Mammary epithelial cell (primary cell): ENCODE measurements at regions of chr2 and their contacts with region 1.

Region 1: GRCh38 chr2:88627056-88627855 is at the start of gene EIF2AK3:
- DNase-seq: peak; percentile 100
- H3K4me3 ChIP-seq: peak within 1 kb of the TSS; percentile 82 to 95 (median 92)
- H3K27ac ChIP-seq: peak within 1 kb of the TSS; percentile 93
- H3K4me1 ChIP-seq: peaks cover 14% of the 10 kb centered on the region
- H3K27me3 ChIP-seq: no peaks in the 10 kb centered on the region
- CTCF ChIP-seq: no peak
- total RNA-seq, gene EIF2AK3: 19.2 to 25.3 TPM

Region 2: DNA sequence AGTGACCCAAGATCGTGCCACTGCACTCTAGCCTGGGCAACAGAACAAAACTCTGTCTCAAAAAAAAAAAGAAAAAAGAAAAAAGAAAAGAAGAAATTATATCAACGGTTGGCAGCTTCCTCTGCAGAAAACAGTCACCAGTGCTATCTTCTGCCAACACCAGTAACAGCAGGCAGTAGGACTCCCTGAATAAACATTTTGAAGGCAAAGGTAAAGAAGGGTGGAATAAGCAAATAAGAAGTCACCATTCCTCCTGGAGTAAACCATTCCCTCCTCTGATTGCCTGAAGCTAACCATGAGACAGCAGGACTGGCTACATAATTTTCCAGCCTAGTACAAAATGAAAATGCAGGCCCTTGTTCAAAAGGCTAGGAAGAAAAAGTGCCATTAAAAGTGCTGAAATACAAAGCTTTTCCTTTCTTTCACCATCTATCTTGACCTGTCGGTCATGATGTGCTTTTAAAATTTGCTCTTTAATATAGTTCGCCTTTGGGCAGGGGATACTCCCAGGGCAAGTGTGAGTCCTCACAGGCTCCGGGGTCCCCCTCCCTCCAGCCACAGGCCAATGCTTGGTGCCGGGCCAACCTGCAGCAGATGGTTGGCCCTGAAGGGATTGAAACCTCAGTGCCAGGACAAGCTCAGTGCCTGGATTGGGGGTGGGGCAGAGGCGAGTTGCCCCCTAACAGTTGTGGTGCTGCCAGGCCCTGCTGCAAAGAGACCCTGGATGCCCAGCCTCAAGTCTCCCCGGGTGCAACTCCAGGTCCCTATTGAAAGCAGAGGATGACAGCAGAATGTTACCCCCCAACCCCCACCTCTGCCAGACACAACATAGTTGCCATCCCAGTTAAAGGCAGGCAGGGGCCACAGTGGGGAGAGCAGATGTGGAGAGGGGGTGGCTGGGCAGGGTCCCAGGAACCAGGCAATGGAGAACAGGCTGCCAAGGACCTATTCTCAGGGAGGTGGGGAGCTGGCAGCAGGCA is 1994.3 kb before region 1 on chr2:
- CTCF ChIA-PET with region 1: interaction called, 17 read pairs
- dilution Hi-C with region 1: no loop called
- in situ Hi-C with region 1: no loop called
- intact Hi-C with region 1: no loop called
- DNase-seq: no peak
- H3K4me3 ChIP-seq: no peak overlapping the region
- H3K27ac ChIP-seq: no peak overlapping the region
- H3K4me1 ChIP-seq: no peaks in the 10 kb centered on the region
- H3K27me3 ChIP-seq: no peaks in the 10 kb centered on the region
- CTCF ChIP-seq: no peak

Region 3: DNA sequence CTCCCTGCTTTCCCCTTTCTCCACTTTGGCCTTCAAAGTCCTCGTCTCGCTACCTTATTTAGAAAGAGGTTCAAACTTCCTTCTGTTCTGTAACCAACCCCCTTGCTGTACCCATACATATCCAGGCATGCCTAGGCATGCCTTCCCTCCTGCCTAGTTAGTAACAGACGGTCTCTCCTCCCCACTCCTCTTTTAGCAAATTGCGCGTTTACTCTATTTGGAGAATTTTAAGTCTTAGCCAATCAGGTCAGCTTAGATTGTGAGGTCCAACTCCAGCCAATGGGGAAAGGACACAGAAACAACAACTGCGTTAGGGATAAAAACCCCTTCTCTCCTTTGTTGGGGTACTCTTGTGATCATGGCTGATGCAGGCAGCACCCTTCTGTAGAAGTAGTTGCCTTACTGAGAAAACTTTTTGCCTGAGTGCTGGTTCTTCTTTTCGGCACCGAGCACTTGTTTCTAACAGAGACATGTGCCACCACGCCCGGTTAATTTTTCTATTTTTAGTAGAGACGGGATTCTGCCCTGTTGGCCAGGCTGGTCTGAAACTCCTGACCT is 88.8 kb before region 1 on chr2:
- CTCF ChIA-PET with region 1: no interaction called
- dilution Hi-C with region 1: no loop called
- in situ Hi-C with region 1: no loop called
- intact Hi-C with region 1: no loop called
- DNase-seq: peak; percentile 5
- H3K4me3 ChIP-seq: no peak overlapping the region
- H3K27ac ChIP-seq: no peak overlapping the region
- H3K4me1 ChIP-seq: peaks cover 14% of the 10 kb centered on the region
- H3K27me3 ChIP-seq: no peaks in the 10 kb centered on the region
- CTCF ChIP-seq: no peak

Region 4: DNA sequence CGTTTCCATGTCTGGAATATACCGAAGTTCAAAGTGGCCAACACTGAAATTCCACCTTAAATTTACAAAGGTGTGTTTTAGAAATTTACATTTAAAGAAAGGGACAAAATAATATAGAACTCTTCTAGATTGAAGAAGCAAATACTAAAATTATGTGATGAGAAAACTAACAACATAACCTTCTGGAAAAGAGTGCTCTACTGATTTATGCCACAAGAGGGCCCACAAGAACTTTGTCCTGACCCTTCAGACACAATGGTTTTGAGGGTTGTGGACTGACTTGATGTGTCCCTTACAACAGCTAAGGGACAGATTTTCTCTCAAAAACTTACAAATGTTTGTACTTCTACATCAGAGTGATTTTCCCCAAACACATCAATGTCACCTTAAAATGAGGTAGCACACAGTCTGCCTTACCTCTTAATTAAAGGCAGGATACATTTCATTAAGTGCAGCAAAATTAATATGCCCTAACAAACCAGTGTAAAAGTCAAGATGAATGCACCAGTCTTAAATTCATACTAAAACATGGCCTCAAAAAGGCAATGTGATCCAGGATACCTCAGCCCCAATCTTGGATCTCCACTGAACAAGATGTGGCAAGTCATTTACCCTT is 36.1 kb before region 1 on chr2:
- CTCF ChIA-PET with region 1: no interaction called
- dilution Hi-C with region 1: no loop called
- in situ Hi-C with region 1: no loop called
- intact Hi-C with region 1: loop called (anchors 1 kb)
- DNase-seq: peak; percentile 50
- H3K4me3 ChIP-seq: no peak overlapping the region
- H3K27ac ChIP-seq: no peak overlapping the region
- H3K4me1 ChIP-seq: no peaks in the 10 kb centered on the region
- H3K27me3 ChIP-seq: no peaks in the 10 kb centered on the region
- CTCF ChIP-seq: peak; percentile 73 to 81

Region 5: DNA sequence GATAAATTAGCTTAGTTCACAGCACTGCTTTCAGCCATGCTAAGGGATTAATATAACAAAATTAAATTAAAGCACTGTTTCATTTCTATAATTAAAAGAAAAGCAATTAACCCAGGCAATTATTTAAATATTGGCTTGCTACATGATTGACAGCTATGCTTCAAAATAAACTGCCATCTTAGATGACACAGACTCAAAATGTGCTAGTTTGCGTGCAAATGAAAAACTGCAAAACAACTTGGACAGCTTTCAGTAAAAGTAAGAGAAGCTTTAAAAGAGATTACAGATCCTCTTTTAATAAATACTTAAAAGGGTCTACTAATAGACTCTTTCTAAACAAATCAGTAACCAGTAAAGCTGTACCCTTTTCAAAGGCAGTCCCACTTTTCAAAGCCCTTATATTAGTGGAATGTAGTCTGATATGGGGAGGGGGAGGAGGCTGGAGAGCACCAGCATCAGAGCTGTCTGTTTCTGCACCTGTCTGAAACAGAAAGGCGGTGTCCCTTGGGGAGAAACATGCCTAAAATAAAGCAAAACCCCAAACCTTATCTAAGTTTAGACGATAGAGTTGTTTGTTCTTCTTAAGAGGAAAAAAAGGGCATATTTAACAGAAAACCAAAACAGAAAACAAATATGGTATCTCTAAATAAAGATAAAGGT is 20.8 kb before region 1 on chr2:
- CTCF ChIA-PET with region 1: no interaction called
- dilution Hi-C with region 1: no loop called
- in situ Hi-C with region 1: no loop called
- intact Hi-C with region 1: loop called (anchors 1 kb)
- DNase-seq: no peak
- H3K4me3 ChIP-seq: no peak overlapping the region
- H3K27ac ChIP-seq: no peak overlapping the region
- H3K4me1 ChIP-seq: peaks cover 23% of the 10 kb centered on the region
- H3K27me3 ChIP-seq: no peaks in the 10 kb centered on the region
- CTCF ChIP-seq: no peak

Region 6: GRCh38 chr2:88638743-88639142 is 11.5 kb after region 1 on chr2:
- CTCF ChIA-PET with region 1: no interaction called
- dilution Hi-C with region 1: no loop called
- in situ Hi-C with region 1: no loop called
- intact Hi-C with region 1: loop called (anchors 1 kb)
- DNase-seq: peak; percentile 74
- H3K4me3 ChIP-seq: no peak overlapping the region
- H3K27ac ChIP-seq: no peak overlapping the region
- H3K4me1 ChIP-seq: peaks cover 17% of the 10 kb centered on the region
- H3K27me3 ChIP-seq: no peaks in the 10 kb centered on the region
- CTCF ChIP-seq: no peak

Region 7: DNA sequence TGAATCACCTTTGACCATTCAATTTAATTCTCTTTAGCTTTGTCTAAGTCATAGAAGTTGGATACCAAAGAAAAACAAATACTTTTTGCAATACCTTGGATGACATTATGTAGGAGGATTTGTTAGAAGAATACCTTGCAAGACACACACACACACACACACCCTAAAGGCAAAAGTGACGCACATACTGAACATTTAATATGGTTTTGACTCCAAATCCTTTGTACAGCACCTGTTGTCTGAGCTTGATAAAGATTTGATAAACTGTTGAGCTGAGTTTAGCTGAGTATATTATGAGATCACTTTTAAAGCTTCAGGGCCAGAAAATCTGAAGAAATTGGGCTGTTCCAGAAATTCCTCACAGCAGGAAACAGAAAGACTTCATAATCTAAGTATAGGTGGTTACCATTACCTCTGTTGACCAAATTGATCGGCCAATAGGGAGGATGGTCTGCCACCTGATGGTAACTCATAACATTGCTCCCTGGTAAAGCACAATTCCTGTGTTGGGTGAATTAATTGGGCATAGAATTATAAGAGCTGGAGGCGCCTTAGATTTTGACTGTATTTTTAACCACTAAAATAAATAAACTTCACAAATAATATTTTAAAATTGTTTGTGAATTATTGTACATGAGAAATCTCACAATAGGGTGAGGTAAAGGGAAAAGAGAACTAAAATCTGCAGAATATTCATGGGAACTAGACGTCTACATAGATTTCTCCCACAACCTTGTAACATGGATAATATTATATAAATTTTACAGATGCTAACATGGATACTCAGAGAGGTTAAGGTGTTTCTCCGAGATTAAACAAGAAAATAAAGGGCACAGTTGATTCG is 42.3 kb after region 1 on chr2:
- CTCF ChIA-PET with region 1: interaction called, 3 read pairs
- dilution Hi-C with region 1: no loop called
- in situ Hi-C with region 1: no loop called
- intact Hi-C with region 1: loop called (anchors 1 kb)
- DNase-seq: peak; percentile 60
- H3K4me3 ChIP-seq: no peak overlapping the region
- H3K27ac ChIP-seq: no peak overlapping the region
- H3K4me1 ChIP-seq: peaks cover 5% of the 10 kb centered on the region
- H3K27me3 ChIP-seq: no peaks in the 10 kb centered on the region
- CTCF ChIP-seq: peak; percentile 80 to 91

Region 8: DNA sequence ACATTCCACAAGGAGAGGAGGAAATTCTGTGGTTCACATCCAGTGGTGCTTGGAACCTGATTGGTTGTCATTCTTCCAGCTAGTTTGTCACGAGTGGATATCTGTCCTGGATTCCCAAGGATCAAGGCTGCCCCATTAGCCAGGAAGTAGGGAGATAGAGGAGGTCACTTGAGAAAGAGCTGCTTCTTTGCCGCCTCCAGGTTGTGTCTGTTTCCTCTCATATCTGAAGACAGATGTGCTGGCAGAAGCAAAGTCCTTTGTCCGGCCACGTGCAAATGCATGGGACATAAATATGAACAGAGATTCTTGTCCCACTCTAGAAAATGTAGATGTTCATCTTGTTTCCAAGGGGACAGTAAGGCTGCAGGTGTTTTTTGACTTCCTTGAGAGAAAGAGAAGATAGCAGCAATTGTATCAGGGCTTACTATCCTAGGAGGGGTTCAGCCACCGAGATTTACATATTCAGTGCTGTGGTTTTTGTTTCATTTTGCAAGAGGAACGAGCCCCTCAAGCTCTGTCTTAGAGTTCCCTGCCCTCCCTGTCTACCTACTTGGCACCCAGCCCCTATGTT is 238.6 kb after region 1 on chr2:
- CTCF ChIA-PET with region 1: no interaction called
- dilution Hi-C with region 1: no loop called
- in situ Hi-C with region 1: no loop called
- intact Hi-C with region 1: no loop called
- DNase-seq: no peak
- H3K4me3 ChIP-seq: no peak overlapping the region
- H3K27ac ChIP-seq: no peak overlapping the region
- H3K4me1 ChIP-seq: no peaks in the 10 kb centered on the region
- H3K27me3 ChIP-seq: peaks cover 4% of the 10 kb centered on the region
- CTCF ChIP-seq: no peak